ENCODE measurements at regions of chr1 and their contacts with region 1.

Region 1: DNA sequence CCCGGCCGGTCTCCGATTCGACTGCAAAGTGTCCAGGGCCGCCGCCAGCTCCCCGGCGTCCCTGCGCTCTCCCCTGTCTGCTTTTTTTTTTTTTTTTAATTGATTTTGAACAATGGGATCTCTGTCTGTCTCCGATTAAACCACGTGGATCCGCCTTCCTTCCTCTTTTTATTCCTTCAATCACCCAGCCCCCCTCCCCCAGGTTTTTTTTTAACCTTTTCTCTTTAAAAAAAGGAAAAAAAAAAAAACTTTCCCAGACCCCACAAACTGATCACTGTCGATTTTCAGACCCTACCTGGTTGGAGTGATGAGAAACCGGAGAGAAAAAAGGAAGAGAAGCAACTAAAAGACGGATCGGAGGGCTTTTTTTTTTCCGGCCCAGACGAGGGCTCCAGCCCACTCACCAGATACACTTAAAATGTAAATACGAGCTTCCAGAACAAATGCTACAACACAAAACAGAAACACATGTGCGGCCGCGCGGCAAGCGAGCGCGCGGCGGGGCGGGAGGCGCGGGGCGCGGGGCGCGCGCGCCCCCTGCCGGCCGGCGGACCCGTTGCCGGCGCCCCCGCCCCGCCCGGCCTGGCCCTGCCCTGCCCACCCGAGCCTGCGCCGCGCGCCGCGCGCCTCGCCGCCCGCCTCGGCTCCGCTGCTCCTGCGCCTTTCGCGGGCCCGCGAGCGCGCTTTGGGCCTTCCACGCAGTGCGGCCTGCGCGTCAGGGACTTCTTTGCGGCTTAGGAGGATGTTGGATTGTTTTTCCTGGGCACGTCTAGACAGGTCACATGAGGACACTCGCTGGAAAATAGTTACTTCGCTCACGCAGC is at the start of gene RCC2:
- DNase-seq: no peak
- H3K4me3 ChIP-seq: peak within 1 kb of the TSS; percentile 68 to 94 (median 76)
- H3K27ac ChIP-seq: peak within 1 kb of the TSS; percentile 84 to 89 (median 86)
- H3K4me1 ChIP-seq: peaks cover 18 to 38% (median 29%) of the 10 kb centered on the region in 4 donors
- H3K27me3 ChIP-seq: no peaks in the 10 kb centered on the region
- CTCF ChIP-seq: peak in 1 of 3 experiments; percentile 24
- EP300 ChIP-seq: no peak
- POLR2A ChIP-seq: no peak
- total RNA-seq, gene RCC2: 12.0 to 22.6 (median 20.5) TPM

Region 2: DNA sequence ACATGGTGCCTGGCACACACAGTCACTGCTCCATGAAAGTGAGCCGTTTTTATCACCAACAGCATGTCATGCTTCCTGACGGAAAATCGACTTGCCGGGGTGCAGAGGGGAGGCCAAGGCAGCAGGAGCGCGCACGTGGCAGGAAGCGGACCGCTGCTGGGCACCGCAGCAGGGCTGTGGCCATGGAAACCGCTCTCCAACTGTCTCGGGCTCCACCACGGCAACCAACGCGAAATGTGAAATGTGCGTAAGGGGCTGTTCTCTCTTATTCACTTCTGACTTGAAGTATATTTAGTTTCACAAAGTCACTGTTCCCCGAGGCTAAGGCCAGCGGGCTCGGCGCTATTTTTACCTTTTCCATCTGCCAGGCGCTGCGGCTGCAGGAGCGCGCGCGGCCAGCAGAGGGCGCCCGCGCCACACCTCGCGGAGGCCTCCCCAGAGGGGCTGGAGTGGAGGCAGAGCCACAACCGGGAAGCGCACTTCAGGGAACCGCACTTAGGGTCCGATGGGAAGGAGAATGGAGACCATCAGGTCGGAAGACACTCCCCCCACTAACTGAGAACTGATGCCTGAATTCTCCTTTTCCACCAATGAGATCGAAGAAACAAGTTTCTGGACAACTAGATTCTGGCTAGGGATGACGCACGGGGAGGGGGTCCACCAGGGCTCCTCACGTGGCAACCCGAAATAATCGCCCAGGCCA is 19.7 kb before region 1 on chr1:
- intact Hi-C with region 1: loop called (anchors 2 kb)
- DNase-seq: no peak
- H3K4me3 ChIP-seq: no peak overlapping the region
- H3K27ac ChIP-seq: peak overlapping the region in 1 of 4 donors; percentile 47
- H3K4me1 ChIP-seq: peaks cover 4 to 28% (median 24%) of the 10 kb centered on the region in 4 donors
- H3K27me3 ChIP-seq: no peaks in the 10 kb centered on the region
- CTCF ChIP-seq: peak; percentile 99 to 100 (median 99)
- EP300 ChIP-seq: no peak
- POLR2A ChIP-seq: no peak

Measured in esophagus muscularis mucosa (tissue), 4 donors.